KBM-7 (cell line): ENCODE measurements at regions of chr22 and their contacts with region 1.

Region 1: DNA sequence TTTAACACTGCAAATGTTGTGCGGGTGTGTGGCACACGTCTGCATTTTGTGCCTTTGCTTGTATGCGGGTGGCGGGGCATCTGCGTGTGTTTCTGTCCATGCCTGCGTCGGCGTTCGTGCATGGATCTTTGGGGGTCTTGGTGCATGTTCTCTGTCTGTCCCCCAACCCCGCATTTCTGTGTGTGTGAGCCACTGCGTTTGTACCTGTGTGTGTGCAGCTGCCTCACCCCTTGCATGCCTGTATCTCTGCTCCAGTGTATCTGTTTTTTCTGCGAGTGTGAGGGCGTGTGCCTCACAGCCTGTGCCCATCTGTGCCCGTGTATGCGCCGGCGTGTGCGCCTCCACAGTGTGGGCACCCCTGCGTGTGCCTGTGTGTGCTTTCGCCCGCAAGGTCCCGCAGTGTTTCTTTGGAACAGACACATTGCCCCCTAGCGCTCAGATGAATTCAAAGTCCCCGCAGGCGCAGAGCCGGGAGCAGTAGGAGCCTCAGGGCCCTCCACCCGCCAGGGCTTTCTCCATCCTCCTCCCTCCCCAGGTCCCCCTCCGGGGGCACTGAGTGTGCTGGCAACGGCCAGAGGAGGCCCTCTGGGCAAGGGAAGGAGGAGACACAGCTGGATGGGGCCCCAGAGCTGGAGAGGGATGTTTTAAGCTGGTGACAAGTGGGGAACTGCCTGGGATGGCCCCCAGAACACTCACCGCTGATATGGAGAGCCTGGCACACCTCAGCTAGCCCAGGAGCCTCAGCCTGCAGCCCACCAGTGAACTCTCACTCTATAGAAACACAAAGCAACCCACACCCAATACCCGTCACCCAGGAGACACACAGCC is 3.1 kb upstream of the MN1 start:
- DNase-seq: peak; percentile 55

Region 2: GRCh38 chr22:27405672-27406388 is 398.9 kb before region 1 on chr22:
- in situ Hi-C with region 1: loop called (anchors 25 kb)
- DNase-seq: peak; percentile 45

Region 3: GRCh38 chr22:27885977-27886842 is 81.5 kb after region 1 on chr22:
- in situ Hi-C with region 1: no loop called
- DNase-seq: peak; percentile 52